ENCODE measurements at regions of chr17 and their contacts with region 1.

Region 1: GRCh38 chr17:47889734-47890529 is 6.1 kb upstream of the SP2 start:
- DNase-seq: peak; percentile 78
- CTCF ChIP-seq: peak; percentile 92

Region 2: DNA sequence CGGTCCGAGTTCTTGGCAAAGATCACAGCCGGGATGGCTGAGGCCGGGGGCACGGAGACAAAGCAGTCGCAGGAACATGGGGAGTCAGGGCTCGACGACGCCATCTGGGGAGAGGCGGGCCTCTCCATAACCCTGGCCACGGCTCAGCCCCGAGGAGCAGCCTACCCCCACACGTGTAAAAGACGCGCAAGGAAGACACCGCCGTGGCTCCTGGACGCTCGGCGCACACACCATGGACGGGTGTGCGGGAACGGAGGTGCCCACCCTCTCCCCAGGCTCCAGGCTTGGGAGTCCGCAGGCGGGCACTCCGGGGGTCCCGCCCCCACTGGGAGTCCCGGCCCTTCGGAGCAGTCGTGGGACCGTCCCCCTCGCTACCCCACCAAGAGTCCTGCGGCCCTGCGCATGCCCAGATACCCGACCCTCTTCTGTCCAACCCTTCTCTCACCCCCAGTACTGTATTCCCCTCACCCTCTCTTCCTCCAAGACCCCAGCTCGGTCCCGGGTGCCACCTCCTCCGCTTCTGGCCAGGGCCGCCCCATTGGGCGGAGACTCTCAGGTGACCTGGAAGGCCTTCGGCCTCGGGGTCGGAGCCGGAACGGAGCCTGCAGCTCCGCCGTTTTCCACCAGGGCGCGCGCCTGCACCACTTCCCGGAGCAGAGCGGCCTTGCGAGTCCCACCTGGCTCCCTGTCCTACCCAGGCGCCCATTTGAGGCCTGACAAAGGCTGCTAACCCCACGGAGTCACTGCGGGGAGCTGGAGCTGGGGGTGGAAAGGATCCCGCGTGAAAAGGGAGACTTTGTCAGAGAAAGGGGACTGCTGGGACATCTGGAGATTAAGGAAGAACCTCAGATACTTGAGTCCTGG is 49.0 kb before region 1 on chr17 and contains the start of gene SCRN2:
- in situ Hi-C with region 1: loop called (anchors 5 kb)
- DNase-seq: peak; percentile 94
- CTCF ChIP-seq: peak; percentile 93

Measured in GM13977 (cell line).